Mammary epithelial cell (primary cell): ENCODE measurements at regions of chr1 and their contacts with region 1.

Region 1: GRCh38 chr1:203625628-203626019 is 1.0 kb upstream of the ATP2B4 start:
- DNase-seq: peak; percentile 88
- H3K4me3 ChIP-seq: no peak overlapping the region
- H3K27ac ChIP-seq: peak overlapping the region; percentile 95
- H3K4me1 ChIP-seq: peaks cover 34% of the 10 kb centered on the region
- H3K27me3 ChIP-seq: no peaks in the 10 kb centered on the region
- CTCF ChIP-seq: peak in 1 of 2 donors; percentile 7

Region 2: GRCh38 chr1:203351037-203352013 is 274.3 kb before region 1 on chr1 and contains the start of gene FMOD:
- CTCF ChIA-PET with region 1: no interaction called
- dilution Hi-C with region 1: no loop called
- in situ Hi-C with region 1: no loop called
- intact Hi-C with region 1: no loop called
- DNase-seq: no peak
- H3K4me3 ChIP-seq: no peak within 1 kb of the TSS
- H3K27ac ChIP-seq: no peak within 1 kb of the TSS
- H3K4me1 ChIP-seq: no peaks in the 10 kb centered on the region
- H3K27me3 ChIP-seq: no peaks in the 10 kb centered on the region
- CTCF ChIP-seq: no peak
- total RNA-seq, gene FMOD: 1.5 TPM in 1 of 2 donors, not detected in the other

Region 3: DNA sequence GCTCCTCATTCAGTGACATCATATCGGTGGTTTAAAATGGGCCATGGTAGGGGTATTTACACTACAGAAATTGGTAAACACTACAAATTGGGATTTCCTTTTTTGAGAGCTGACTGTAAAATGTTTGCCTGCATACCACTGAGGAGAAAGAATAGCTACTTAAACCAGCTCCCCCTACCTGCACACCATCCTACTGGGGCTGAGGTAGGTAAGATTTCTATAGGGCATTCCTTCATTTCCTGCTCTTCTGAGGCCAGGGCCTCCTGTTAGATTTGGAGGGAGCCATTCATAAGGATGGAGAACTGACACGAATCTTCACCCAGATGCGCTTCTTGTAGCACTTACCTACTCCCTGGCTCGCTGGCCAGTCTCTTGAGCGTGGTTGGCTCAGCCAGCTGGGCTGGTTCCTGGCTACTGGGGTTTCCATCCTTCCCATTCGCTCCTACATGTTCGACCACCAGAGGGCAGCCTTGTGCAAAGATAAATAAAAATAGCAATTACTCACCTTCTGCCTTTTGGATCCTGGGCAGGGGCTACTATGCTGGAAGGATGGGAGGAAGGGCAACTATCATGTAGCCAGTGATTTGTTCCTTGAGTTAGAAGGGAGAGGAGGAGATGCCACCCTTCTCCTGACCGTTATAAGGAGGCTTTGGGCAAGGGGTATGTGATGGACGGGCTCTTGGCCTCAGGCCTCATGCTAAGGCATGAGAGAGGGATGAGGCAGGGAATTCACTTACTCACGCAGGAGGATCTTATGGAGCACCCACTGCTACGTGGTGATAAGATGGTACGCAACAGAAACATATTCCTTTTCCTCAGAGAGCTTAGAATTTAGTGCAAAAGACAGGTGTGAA is 121.0 kb before region 1 on chr1:
- CTCF ChIA-PET with region 1: no interaction called
- dilution Hi-C with region 1: no loop called
- in situ Hi-C with region 1: no loop called
- intact Hi-C with region 1: loop called (anchors 1 kb)
- DNase-seq: peak; percentile 68
- H3K4me3 ChIP-seq: no peak overlapping the region
- H3K27ac ChIP-seq: no peak overlapping the region
- H3K4me1 ChIP-seq: no peaks in the 10 kb centered on the region
- H3K27me3 ChIP-seq: no peaks in the 10 kb centered on the region
- CTCF ChIP-seq: peak; percentile 64 to 71

Region 4: DNA sequence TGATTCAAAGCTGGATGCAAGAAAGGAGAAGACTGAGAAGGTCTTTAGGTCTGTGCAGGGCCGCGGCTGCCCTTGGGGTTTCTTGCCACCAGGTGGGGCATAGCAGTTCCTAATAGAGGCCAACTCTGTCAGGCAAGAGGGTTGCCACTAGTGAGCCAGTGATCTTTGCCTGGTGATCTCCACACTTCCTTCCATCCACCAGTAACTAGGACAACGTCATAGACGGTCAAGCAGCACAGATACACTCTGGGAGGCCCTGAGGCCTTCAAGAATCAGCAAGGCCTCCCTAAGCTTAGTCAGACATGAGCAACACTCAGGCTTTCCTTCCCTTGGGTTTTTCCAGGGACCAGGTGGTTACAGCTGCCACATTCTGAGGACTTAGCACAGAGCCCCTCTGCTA is 31.9 kb before region 1 on chr1:
- CTCF ChIA-PET with region 1: no interaction called
- dilution Hi-C with region 1: loop called (anchors 5 kb)
- in situ Hi-C with region 1: no loop called
- intact Hi-C with region 1: no loop called
- DNase-seq: peak; percentile 62
- H3K4me3 ChIP-seq: no peak overlapping the region
- H3K27ac ChIP-seq: no peak overlapping the region
- H3K4me1 ChIP-seq: peaks cover 3% of the 10 kb centered on the region
- H3K27me3 ChIP-seq: no peaks in the 10 kb centered on the region
- CTCF ChIP-seq: peak; percentile 11 to 39

Region 5: DNA sequence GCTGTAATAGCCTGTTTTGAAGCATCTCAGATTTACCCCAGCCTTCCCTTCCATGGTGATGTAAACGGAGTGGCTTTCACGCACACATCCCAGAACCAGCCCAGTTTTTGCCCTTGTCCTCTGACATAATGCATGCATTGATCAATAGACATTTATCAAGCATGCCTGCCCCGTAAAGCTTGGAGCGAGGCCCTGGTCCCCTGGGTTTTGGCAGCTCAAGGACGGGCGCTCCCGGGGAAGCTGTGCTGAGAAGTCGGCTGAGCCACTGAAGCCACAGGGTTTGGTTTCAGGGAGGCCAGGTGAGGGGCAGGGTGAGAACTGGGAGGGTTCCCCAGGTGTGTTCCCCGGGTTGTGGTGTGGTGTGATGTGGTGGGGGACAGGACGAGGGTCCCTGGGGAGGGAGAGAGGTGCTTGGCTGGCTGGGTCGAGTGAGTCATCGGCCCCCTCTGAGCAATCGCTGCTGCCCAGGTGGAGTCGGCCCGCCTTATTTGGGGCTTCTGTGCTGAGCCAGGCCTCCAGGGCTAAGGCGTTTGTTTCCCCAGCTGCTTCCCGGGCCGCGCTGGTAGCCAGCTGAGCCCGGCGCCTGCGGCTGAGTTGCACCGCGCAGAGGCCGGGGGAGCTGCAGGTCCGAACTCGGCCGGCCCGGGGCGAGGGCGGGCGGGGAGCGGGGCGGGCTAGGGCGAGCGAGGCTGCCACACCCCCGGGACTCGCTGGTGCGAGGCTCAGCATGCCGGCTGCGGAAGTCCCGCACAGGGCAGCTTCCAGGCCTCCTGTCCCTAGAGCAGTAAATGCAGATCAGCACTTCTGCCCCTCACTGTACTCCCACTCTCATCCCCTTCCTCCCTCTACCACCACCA is 24.6 kb after region 1 on chr1:
- CTCF ChIA-PET with region 1: interaction called, 5 read pairs
- dilution Hi-C with region 1: no loop called
- in situ Hi-C with region 1: no loop called
- intact Hi-C with region 1: loop called (anchors 1 kb)
- DNase-seq: peak; percentile 96
- H3K4me3 ChIP-seq: peak overlapping the region in 1 of 3 experiments; percentile 32
- H3K27ac ChIP-seq: peak overlapping the region; percentile 94
- H3K4me1 ChIP-seq: peaks cover 35% of the 10 kb centered on the region
- H3K27me3 ChIP-seq: no peaks in the 10 kb centered on the region
- CTCF ChIP-seq: no peak

Region 6: GRCh38 chr1:203692565-203693470 is 67.2 kb after region 1 on chr1:
- CTCF ChIA-PET with region 1: interaction called, 3 read pairs
- dilution Hi-C with region 1: no loop called
- in situ Hi-C with region 1: no loop called
- intact Hi-C with region 1: loop called (anchors 1 kb)
- DNase-seq: peak; percentile 97
- H3K4me3 ChIP-seq: no peak overlapping the region
- H3K27ac ChIP-seq: peak overlapping the region; percentile 97
- H3K4me1 ChIP-seq: peaks cover 28% of the 10 kb centered on the region
- H3K27me3 ChIP-seq: no peaks in the 10 kb centered on the region
- CTCF ChIP-seq: no peak

Region 7: GRCh38 chr1:203795441-203796235 is 170.0 kb after region 1 on chr1 and contains the starts of genes ZBED6 and ZC3H11A:
- CTCF ChIA-PET with region 1: no interaction called
- dilution Hi-C with region 1: no loop called
- in situ Hi-C with region 1: no loop called
- intact Hi-C with region 1: loop called (anchors 2 kb)
- DNase-seq: peak; percentile 99
- H3K4me3 ChIP-seq: peak within 1 kb of the TSS; percentile 46 to 84 (median 67)
- H3K27ac ChIP-seq: peak within 1 kb of the TSS; percentile 94
- H3K4me1 ChIP-seq: peaks cover 25% of the 10 kb centered on the region
- H3K27me3 ChIP-seq: no peaks in the 10 kb centered on the region
- CTCF ChIP-seq: no peak
- total RNA-seq, gene ZBED6: 28.8 to 32.3 TPM
- total RNA-seq, gene ZC3H11A: 77.7 to 91.5 TPM